ENCODE measurements at regions of chr17 and their contacts with region 1.

Region 1: GRCh38 chr17:82668631-82669099 is 20.4 kb upstream of the WDR45B start:
- DNase-seq: no peak
- H3K4me3 ChIP-seq: no peak overlapping the region
- H3K27me3 ChIP-seq: no peaks in the 10 kb centered on the region
- CTCF ChIP-seq: peak; percentile 73

Region 2: GRCh38 chr17:82320956-82321927 is 347.4 kb before region 1 on chr17:
- CTCF ChIA-PET with region 1: no interaction called
- POLR2A ChIA-PET with region 1: no interaction called
- DNase-seq: no peak
- H3K4me3 ChIP-seq: no peak overlapping the region
- H3K27me3 ChIP-seq: peaks cover 6% of the 10 kb centered on the region
- CTCF ChIP-seq: peak; percentile 60

Region 3: GRCh38 chr17:82636626-82637598 is 31.8 kb before region 1 on chr17:
- CTCF ChIA-PET with region 1: no interaction called
- POLR2A ChIA-PET with region 1: no interaction called
- DNase-seq: no peak
- H3K4me3 ChIP-seq: no peak overlapping the region
- H3K27me3 ChIP-seq: no peaks in the 10 kb centered on the region
- CTCF ChIP-seq: no peak

Region 4: DNA sequence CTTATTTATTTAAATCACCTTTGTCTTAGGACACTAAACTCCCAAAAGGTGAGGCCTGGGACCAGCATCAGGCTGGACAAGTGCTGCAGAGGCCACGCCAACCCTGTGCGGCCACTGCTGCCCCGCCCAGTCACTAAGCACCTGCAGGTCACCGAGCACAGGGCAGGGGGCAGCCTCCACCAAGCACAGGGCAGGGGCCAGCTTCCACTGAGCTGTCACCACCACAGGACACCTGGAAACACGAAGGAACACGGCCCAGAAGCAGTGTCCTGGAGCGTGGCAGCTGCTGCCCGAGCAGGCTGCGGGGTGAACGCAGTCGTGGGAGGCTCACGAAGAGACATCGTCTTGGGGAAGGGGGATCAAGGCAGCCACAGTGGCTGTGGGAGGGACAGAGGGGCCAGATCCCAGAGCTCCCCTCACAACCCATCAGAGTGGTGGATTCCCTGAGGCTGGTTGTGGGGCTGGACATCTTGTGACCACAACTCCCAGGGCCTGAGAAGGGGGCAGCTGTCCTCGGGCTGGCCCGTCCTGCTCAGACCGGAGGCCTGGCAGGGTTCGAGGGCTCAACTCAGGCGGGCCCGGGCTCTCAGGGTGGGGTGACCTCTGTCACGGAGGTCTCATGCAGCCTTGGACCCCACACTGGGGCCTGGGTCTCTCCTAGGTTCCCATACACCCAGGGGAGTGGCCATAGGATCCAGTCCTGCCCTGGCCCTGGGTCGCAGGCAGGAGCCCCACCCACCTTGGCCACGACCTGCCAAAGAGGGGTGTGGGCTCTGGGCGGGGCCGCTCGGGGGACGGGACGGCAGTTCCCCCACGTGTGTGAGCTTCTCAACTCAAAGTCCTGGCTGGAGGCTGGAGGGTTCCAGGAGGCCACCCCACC is 11.2 kb after region 1 on chr17:
- CTCF ChIA-PET with region 1: interaction called, 12 read pairs
- POLR2A ChIA-PET with region 1: no interaction called
- DNase-seq: no peak
- H3K4me3 ChIP-seq: no peak overlapping the region
- H3K27me3 ChIP-seq: no peaks in the 10 kb centered on the region
- CTCF ChIP-seq: no peak

Region 5: DNA sequence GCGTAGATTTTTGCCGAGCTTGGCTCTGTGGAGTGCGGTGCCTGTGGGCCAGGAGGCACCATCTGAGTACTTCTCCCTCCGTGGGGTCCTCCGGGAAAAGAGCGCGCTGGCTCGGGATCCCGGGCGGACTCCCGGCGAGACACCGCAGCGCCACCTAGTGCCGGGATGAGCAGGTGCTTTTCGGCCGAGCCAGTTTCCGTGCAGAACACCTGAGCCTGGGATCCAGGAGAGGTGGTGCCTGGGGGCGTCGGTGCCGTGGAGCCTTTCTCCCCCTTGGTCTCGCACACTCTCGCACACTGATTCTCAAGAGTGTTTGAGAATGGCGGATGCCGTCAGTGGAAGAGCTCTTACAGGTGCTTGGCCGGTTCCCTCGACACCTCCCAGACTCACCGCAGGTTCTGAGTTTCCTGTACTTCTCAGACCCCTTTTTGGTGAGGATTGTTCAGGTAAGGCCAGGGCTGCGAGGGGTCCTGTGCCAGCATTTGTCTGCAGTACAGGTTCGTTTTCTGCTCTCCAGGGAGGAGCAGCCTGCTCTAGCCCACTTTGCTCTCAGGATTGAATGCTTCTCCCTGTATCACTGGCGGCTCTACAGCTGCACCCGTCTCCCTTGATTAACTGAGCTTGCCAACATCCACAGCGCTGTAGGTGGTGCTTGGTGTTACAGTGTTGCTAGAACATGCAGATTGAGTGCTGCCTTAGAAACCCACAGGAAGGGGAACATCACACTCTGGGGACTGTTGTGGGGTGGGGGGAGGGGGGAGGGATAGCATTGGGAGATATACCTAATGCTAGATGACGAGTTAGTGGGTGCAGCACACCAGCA is 106.5 kb after region 1 on chr17:
- CTCF ChIA-PET with region 1: interaction called, 10 read pairs
- POLR2A ChIA-PET with region 1: no interaction called
- DNase-seq: no peak
- H3K4me3 ChIP-seq: no peak overlapping the region
- H3K27me3 ChIP-seq: no peaks in the 10 kb centered on the region
- CTCF ChIP-seq: peak; percentile 96

Region 6: GRCh38 chr17:83189044-83190003 is 520.7 kb after region 1 on chr17:
- CTCF ChIA-PET with region 1: no interaction called
- POLR2A ChIA-PET with region 1: no interaction called
- DNase-seq: peak; percentile 74
- H3K4me3 ChIP-seq: no peak overlapping the region
- H3K27me3 ChIP-seq: no peaks in the 10 kb centered on the region
- CTCF ChIP-seq: no peak

Measured in BJ (cell line).